Activated CD8-positive, alpha-beta T cell treated with anti-CD3 and anti-CD28 coated beads for 36 hours (primary cell): ENCODE measurements at regions of chr11 and their contacts with region 1.

Region 1: GRCh38 chr11:128630367-128631230 is 43.2 kb upstream of the ETS1 start:
- DNase-seq: peak; percentile 94
- ATAC-seq: peak; percentile 71
- H3K4me3 Mint-ChIP-seq: peak overlapping the region; percentile 72
- H3K27ac Mint-ChIP-seq: peak overlapping the region; percentile 97
- H3K4me1 Mint-ChIP-seq: peaks cover 66% of the 10 kb centered on the region
- H3K27me3 Mint-ChIP-seq: no peaks in the 10 kb centered on the region
- CTCF ChIP-seq: peak; percentile 72

Region 2: GRCh38 chr11:128187835-128188234 is 442.8 kb before region 1 on chr11:
- CTCF ChIA-PET with region 1: interaction called, 19 read pairs
- POLR2A ChIA-PET with region 1: interaction called, 3 read pairs
- intact Hi-C with region 1: no loop called
- DNase-seq: no peak
- ATAC-seq: no peak
- H3K4me3 Mint-ChIP-seq: no peak overlapping the region
- H3K27ac Mint-ChIP-seq: no peak overlapping the region
- H3K4me1 Mint-ChIP-seq: peaks cover 30% of the 10 kb centered on the region
- H3K27me3 Mint-ChIP-seq: no peaks in the 10 kb centered on the region
- CTCF ChIP-seq: no peak

Region 3: DNA sequence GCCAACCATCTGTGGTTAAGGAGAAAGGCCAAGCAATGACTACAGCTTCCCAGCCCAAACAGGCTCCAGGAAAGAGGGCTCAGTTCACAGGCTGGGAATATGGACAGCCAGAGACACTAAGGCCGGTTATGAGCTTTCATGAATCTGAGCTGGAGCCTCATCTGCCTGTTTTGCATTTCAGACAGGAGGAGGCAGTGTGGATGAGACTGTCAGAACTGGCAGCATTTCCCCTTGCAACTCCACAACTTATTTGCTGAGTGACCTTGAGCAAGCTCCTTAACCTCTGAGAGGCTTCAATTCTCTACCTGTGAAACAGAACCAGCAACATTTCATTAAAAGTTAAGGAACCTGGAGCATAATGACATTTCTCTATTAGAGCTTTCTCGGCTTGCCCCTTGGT is 307.2 kb before region 1 on chr11:
- CTCF ChIA-PET with region 1: interaction called, 17 read pairs
- POLR2A ChIA-PET with region 1: interaction called, 4 read pairs
- intact Hi-C with region 1: loop called (anchors 10 kb)
- DNase-seq: peak; percentile 61
- ATAC-seq: no peak
- H3K4me3 Mint-ChIP-seq: peak overlapping the region; percentile 70
- H3K27ac Mint-ChIP-seq: peak overlapping the region; percentile 98
- H3K4me1 Mint-ChIP-seq: peaks cover 85% of the 10 kb centered on the region
- H3K27me3 Mint-ChIP-seq: no peaks in the 10 kb centered on the region
- CTCF ChIP-seq: peak; percentile 70

Region 4: DNA sequence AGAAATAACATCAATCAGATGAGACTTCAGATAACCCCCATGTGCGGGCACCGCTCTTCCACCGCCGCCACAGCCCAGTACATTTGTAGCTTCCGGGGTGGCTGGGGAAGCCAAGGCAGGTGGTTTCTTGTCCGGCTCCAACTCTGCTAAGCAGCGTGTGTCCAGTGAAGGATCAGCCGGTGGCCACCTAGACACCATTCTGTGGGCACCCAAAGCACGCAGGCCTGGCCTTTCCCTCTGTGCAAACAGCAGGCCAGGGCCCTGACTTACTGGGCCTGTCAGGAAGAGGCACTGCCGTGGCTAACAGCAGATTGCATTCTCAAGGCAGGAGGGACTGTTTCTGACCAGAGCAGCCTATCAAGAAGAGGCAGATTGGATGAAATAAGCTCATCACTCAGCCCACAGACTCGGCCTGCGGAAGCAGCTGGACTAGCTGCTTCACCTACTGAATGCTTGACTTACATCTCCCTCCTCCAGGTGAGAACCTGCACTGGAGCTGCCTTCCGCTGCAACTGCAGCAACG is 118.1 kb before region 1 on chr11:
- CTCF ChIA-PET with region 1: interaction called, 400 read pairs
- POLR2A ChIA-PET with region 1: interaction called, 78 read pairs
- intact Hi-C with region 1: no loop called
- DNase-seq: peak; percentile 71
- ATAC-seq: peak; percentile 65
- H3K4me3 Mint-ChIP-seq: peak overlapping the region; percentile 95
- H3K27ac Mint-ChIP-seq: peak overlapping the region; percentile 96
- H3K4me1 Mint-ChIP-seq: peaks cover 67% of the 10 kb centered on the region
- H3K27me3 Mint-ChIP-seq: no peaks in the 10 kb centered on the region
- CTCF ChIP-seq: no peak

Region 5: GRCh38 chr11:128552783-128553661 is 77.6 kb before region 1 on chr11:
- CTCF ChIA-PET with region 1: interaction called, 22 read pairs
- POLR2A ChIA-PET with region 1: interaction called, 3 read pairs
- intact Hi-C with region 1: no loop called
- DNase-seq: peak; percentile 41
- ATAC-seq: peak; percentile 8
- H3K4me3 Mint-ChIP-seq: peak overlapping the region; percentile 31
- H3K27ac Mint-ChIP-seq: peak overlapping the region; percentile 89
- H3K4me1 Mint-ChIP-seq: peaks cover 59% of the 10 kb centered on the region
- H3K27me3 Mint-ChIP-seq: no peaks in the 10 kb centered on the region
- CTCF ChIP-seq: no peak

Region 6: GRCh38 chr11:128563308-128563707 is 67.3 kb before region 1 on chr11:
- CTCF ChIA-PET with region 1: no interaction called
- POLR2A ChIA-PET with region 1: no interaction called
- intact Hi-C with region 1: no loop called
- DNase-seq: no peak
- ATAC-seq: no peak
- H3K4me3 Mint-ChIP-seq: no peak overlapping the region
- H3K27ac Mint-ChIP-seq: no peak overlapping the region
- H3K4me1 Mint-ChIP-seq: peaks cover 24% of the 10 kb centered on the region
- H3K27me3 Mint-ChIP-seq: no peaks in the 10 kb centered on the region
- CTCF ChIP-seq: no peak

Region 7: GRCh38 chr11:128711136-128711535 is 80.5 kb after region 1 on chr11:
- CTCF ChIA-PET with region 1: no interaction called
- POLR2A ChIA-PET with region 1: no interaction called
- intact Hi-C with region 1: no loop called
- DNase-seq: no peak
- ATAC-seq: no peak
- H3K4me3 Mint-ChIP-seq: no peak overlapping the region
- H3K27ac Mint-ChIP-seq: no peak overlapping the region
- H3K4me1 Mint-ChIP-seq: peaks cover 91% of the 10 kb centered on the region
- H3K27me3 Mint-ChIP-seq: no peaks in the 10 kb centered on the region
- CTCF ChIP-seq: no peak

Region 8: GRCh38 chr11:128831174-128832120 is 200.8 kb after region 1 on chr11:
- CTCF ChIA-PET with region 1: interaction called, 85 read pairs
- POLR2A ChIA-PET with region 1: interaction called, 7 read pairs
- intact Hi-C with region 1: loop called (anchors 5 kb)
- DNase-seq: peak; percentile 92
- ATAC-seq: peak; percentile 85
- H3K4me3 Mint-ChIP-seq: peak overlapping the region; percentile 52
- H3K27ac Mint-ChIP-seq: peak overlapping the region; percentile 92
- H3K4me1 Mint-ChIP-seq: peaks cover 26% of the 10 kb centered on the region
- H3K27me3 Mint-ChIP-seq: no peaks in the 10 kb centered on the region
- CTCF ChIP-seq: peak; percentile 82

Region 9: GRCh38 chr11:129013737-129014475 is 383.3 kb after region 1 on chr11:
- CTCF ChIA-PET with region 1: no interaction called
- POLR2A ChIA-PET with region 1: no interaction called
- intact Hi-C with region 1: no loop called
- DNase-seq: no peak
- ATAC-seq: no peak
- H3K4me3 Mint-ChIP-seq: no peak overlapping the region
- H3K27ac Mint-ChIP-seq: no peak overlapping the region
- H3K4me1 Mint-ChIP-seq: no peaks in the 10 kb centered on the region
- H3K27me3 Mint-ChIP-seq: no peaks in the 10 kb centered on the region
- CTCF ChIP-seq: no peak